Dorsolateral prefrontal cortex (tissue), 120 donors: ENCODE measurements at regions of chr5 and their contacts with region 1.

Region 1: DNA sequence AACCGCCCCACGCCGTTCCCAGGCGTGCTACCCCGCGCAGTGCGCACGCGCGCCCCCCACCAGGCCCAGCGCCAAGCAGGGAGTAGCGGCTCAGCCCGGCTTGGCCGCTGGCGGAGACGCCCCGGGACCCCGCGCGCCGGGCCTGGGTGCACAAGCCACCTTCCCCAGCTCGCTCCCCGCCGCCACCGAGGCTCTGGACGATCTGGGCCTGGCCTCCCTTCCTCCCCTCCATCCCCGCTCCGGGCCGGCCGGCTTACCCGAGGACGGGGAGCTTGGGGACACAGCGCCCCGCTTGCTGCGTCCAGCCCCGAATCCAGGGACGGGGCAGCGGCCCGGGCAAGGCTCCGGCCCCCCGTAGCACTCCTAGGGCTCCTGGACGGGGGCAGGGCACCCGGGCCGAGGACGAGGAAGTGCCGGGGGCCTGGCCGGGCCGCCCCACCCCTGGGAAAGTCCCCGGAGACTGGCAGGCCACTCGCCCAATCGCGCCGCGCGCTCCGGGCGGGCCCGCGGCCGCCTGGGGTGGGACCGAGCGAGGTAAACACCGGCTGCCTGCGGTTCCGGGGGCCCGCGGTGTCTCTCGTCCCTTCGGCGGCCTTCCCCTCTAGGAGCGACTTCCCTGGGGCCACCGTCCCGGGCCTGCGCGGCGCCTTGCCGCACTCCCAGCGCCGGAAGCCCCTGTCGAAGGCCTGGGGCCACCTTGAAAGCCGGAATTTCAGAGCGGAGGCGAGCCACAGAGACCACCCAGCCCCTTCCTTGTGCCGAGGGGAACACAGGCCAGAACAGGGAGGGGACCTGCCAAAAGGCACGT is at the start of gene TNIP1:
- DNase-seq: peak; percentile 79 to 97 (median 89)
- H3K4me3 ChIP-seq: peak within 1 kb of the TSS; percentile 64 to 100 (median 95)
- H3K27ac ChIP-seq: peak within 1 kb of the TSS; percentile 91 to 99 (median 98)
- H3K27me3 ChIP-seq: no peaks in the 10 kb centered on the region
- CTCF ChIP-seq: peak in 18 of 56 donors; percentile 1 to 41 (median 17)
- total RNA-seq, gene TNIP1: 39.3 to 76.8 (median 57.4) TPM

Region 2: DNA sequence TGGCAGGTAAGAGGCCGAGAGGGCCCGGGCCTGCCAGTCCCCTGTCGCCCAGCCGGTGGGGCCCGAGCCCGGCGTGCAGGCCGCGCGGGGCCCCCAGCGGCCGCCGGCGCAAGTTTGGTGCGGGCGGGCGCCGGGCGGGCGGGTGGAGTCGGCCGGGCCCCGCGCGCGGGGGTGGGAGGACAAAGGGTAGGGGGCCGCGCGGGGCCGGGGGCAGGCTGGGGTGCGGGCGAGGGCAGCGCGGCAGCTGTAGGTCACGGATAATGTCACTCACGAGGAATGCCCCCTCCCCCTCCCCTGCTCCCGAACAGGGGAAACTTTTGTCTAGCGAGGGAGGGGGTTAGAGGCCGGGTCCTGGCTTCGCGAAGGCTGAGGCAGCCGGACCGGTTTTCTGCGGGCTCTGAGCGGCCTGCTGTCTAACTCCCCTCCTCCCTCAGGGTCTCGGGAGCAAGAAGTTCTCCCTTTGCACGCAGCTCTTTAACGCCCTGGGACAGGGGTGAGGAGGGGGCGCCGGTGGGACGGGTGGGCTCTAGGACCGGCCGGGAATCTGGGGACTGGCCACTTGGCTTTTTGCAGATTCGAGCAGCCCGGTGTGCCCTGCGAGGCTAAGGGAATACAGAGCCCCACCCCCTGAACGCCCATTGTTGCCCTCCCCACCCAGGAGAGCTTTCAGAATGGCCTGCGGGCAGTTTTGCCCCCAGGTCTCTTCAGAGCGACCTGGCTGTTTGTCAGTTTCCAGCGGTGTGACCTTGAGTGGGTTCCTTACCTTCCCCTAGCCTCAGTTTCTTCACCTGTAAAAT is 594.2 kb before region 1 on chr5:
- intact Hi-C with region 1: loop called in 1 of 2 experiments (anchors 10 kb)
- DNase-seq: peak in 3 of 10 donors; percentile 57 to 64 (median 60)
- H3K4me3 ChIP-seq: peak overlapping the region; percentile 62 to 99 (median 92)
- H3K27ac ChIP-seq: peak overlapping the region; percentile 67 to 98 (median 95)
- H3K27me3 ChIP-seq: no peaks in the 10 kb centered on the region
- CTCF ChIP-seq: peak in 12 of 56 donors; percentile 1 to 33 (median 16)

Region 3: DNA sequence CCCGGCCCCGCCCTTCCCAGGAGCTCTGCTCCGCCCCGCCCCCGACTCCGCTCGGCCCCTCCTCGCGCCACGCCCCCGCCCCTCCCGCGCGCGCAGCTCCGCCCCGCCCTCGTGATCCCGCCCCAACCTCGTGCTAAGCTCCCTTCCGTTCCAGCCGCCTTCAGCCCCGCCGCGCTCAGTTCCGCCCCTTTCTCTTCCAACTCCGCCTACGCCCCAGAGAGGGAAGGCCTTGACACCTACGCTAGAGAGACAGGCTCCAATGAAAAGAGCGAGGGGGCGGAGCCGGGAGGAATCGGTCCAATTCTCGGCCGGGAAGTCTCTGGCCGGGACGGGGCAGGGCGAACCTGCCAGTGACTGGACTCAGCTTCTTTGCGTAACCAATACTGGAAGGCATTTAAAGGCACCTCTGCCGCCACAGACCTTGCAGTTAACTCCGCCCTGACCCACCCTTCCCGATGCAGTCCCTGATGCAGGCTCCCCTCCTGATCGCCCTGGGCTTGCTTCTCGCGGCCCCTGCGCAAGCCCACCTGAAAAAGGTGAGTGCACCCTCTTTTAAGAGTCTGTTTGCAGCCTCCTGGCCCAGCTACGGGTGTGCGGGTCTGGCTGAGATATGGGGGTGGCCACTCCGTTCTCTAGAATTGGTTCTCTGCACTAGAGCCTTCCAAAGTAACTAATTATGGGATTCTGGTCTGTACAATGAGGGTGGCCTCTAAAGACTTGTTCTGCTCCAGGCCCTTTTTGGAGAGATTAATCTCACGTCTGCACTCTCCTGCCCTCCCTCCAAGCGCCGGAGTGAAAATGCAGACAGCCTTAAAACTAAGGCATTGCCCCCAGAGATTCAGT is 172.2 kb after region 1 on chr5 and contains the start of gene GM2A:
- intact Hi-C with region 1: loop called in 1 of 2 experiments (anchors 5 kb)
- DNase-seq: peak; percentile 96 to 100 (median 99)
- H3K4me3 ChIP-seq: peak within 1 kb of the TSS; percentile 61 to 99 (median 90)
- H3K27ac ChIP-seq: peak within 1 kb of the TSS in 55 of 59 donors; percentile 10 to 91 (median 79)
- H3K27me3 ChIP-seq: no peaks in the 10 kb centered on the region
- CTCF ChIP-seq: peak in 11 of 56 donors; percentile 4 to 47 (median 21)
- total RNA-seq, gene GM2A: 25.4 to 82.0 (median 40.5) TPM